Activated CD4-positive, alpha-beta T cell treated with anti-CD3 and anti-CD28 coated beads, Interleukin-2, amount 10 ng/mL, durations not matched to agents 7 days and 5 days (primary cell): ENCODE measurements at regions of chr1 and their contacts with region 1.

Region 1: GRCh38 chr1:206816390-206817287 is 44.3 kb upstream of the IL10 start:
- DNase-seq: peak; percentile 59
- H3K4me3 Mint-ChIP-seq: peak overlapping the region; percentile 7
- H3K27ac Mint-ChIP-seq: peak overlapping the region; percentile 88
- H3K4me1 Mint-ChIP-seq: peaks cover 45% of the 10 kb centered on the region
- H3K27me3 Mint-ChIP-seq: peaks cover 3% of the 10 kb centered on the region

Region 2: GRCh38 chr1:206833106-206833680 is 16.6 kb after region 1 on chr1:
- CTCF ChIA-PET with region 1: interaction called, 16 read pairs
- POLR2A ChIA-PET with region 1: interaction called, 3 read pairs
- DNase-seq: no peak
- H3K4me3 Mint-ChIP-seq: no peak overlapping the region
- H3K27ac Mint-ChIP-seq: no peak overlapping the region
- H3K4me1 Mint-ChIP-seq: peaks cover 54% of the 10 kb centered on the region
- H3K27me3 Mint-ChIP-seq: peaks cover 28% of the 10 kb centered on the region